ENCODE measurements at regions of chrX and their contacts with region 1.

Region 1: DNA sequence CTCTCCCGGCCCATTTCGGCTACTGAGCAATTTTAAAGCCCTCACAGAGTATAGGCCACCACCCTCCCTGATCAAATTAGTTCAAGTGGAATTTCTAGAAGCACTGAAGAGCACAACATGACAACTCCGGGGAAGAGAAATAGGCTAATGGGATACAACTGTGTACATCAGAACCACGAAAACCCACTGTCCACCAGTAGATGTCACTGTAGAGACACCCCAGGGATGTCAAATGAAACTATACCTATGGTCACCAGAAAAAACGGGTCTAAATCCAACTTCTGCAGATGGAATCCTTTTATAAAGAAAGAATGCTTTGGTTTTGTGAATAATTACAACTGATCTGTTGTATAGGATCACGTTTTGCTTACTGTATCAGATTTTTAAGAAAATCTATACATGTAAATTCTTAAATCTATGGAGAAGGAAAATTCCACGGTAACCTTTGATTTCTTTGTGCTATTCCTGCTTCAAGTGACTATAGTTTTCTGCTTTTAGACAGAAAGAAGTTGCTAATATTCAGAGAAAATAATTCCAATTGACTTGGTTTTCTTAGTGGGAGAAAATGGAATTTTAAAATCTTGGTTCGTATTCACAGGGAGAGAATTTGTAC is 29.5 kb upstream of the MAP3K15 start:
- DNase-seq: no peak
- H3K4me3 ChIP-seq: no peak overlapping the region
- H3K27ac ChIP-seq: no peak overlapping the region
- H3K4me1 ChIP-seq: no peaks in the 10 kb centered on the region
- H3K27me3 ChIP-seq: no peaks in the 10 kb centered on the region
- CTCF ChIP-seq: peak; percentile 49 to 69 (median 63)
- EP300 ChIP-seq: no peak
- POLR2A ChIP-seq: no peak

Region 2: GRCh38 chrX:19372170-19372546 is 172.6 kb before region 1 on chrX:
- intact Hi-C with region 1: loop called (anchors 10 kb)
- DNase-seq: no peak
- H3K4me3 ChIP-seq: peak overlapping the region; percentile 45 to 58 (median 48)
- H3K27ac ChIP-seq: no peak overlapping the region
- H3K4me1 ChIP-seq: peaks cover 0 to 13% (median 12%) of the 10 kb centered on the region in 4 donors
- H3K27me3 ChIP-seq: no peaks in the 10 kb centered on the region
- CTCF ChIP-seq: peak; percentile 51 to 69 (median 53)
- EP300 ChIP-seq: no peak
- POLR2A ChIP-seq: no peak

Region 3: GRCh38 chrX:20128670-20129069 is 583.9 kb after region 1 on chrX:
- intact Hi-C with region 1: loop called (anchors 10 kb)
- DNase-seq: no peak
- H3K4me3 ChIP-seq: no peak overlapping the region
- H3K27ac ChIP-seq: no peak overlapping the region
- H3K4me1 ChIP-seq: peaks cover 0 to 7% (median 5%) of the 10 kb centered on the region in 4 donors
- H3K27me3 ChIP-seq: no peaks in the 10 kb centered on the region
- CTCF ChIP-seq: no peak
- EP300 ChIP-seq: no peak
- POLR2A ChIP-seq: no peak

Measured in esophagus muscularis mucosa (tissue), 4 donors.